ENCODE measurements at regions of chr7 and their contacts with region 1.

Region 1: DNA sequence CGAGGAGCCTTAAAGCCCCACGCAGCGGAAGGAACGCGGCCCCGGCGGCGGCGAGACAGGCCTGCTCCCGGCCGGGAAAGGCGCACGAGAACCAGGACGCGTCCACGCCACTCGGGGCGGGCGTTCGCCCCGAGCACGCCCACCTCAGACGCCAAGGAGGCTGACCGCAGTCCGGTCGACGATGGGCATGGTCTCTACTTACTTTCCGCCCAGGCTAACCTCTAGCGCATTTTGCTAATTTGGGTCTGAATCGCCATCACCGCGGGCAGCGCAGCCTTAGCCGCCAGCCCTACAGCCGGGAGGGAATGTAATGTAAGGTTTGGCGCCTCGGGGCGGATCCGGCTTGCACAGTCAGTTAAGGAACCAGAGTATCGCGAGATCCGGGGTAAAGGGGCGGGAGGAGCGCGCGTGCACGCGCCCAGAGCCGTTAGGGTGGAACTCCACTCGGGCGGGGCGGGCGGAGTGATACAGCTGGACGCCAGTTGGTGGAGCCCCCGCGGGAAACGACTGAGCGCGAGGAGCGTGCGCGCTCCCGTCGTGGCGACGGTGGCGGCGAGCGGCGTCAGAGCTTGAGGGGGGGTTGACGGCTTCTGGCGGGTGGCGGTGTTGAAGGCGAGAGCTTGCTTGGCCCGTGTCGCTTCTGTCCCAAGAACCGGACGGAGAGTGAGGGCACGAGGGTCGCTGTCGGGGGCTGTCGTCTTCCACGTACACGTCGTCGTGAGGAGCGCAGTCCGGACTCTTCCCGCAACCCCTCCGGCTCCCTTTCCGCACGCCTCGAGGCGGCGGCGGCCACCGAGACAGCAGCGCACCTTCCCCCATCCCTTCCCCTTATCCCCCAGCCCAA is at the start of gene LUC7L2:
- DNase-seq: peak; percentile 100
- H3K4me3 ChIP-seq: peak within 1 kb of the TSS; percentile 76 to 98 (median 94)
- H3K27ac ChIP-seq: peak within 1 kb of the TSS; percentile 98 to 100 (median 100)
- H3K4me1 ChIP-seq: peaks cover 0 to 41% (median 32%) of the 10 kb centered on the region in 4 donors
- H3K27me3 ChIP-seq: no peaks in the 10 kb centered on the region
- CTCF ChIP-seq: no peak
- EP300 ChIP-seq: peak in 2 of 4 donors; percentile 20 to 59
- POLR2A ChIP-seq: peak; percentile 82 to 93
- total RNA-seq, gene LUC7L2: 67.1 to 79.1 (median 74.5) TPM

Region 2: GRCh38 chr7:139340037-139340807 is 19.4 kb before region 1 on chr7:
- intact Hi-C with region 1: loop called (anchors 1 kb)
- DNase-seq: peak; percentile 100
- H3K4me3 ChIP-seq: peak overlapping the region; percentile 63 to 93 (median 88)
- H3K27ac ChIP-seq: peak overlapping the region; percentile 97 to 100 (median 99)
- H3K4me1 ChIP-seq: peaks cover 0 to 17% (median 10%) of the 10 kb centered on the region in 4 donors
- H3K27me3 ChIP-seq: no peaks in the 10 kb centered on the region
- CTCF ChIP-seq: peak; percentile 39 to 72 (median 64)
- EP300 ChIP-seq: peak in 2 of 4 donors; percentile 16 to 76
- POLR2A ChIP-seq: peak in 1 of 2 donors; percentile 41

Region 3: GRCh38 chr7:139422126-139422525 is 62.5 kb after region 1 on chr7:
- intact Hi-C with region 1: loop called (anchors 2 kb)
- DNase-seq: peak; percentile 74
- H3K4me3 ChIP-seq: no peak overlapping the region
- H3K27ac ChIP-seq: peak overlapping the region; percentile 36 to 82 (median 75)
- H3K4me1 ChIP-seq: peaks cover 0 to 34% (median 33%) of the 10 kb centered on the region in 4 donors
- H3K27me3 ChIP-seq: no peaks in the 10 kb centered on the region
- CTCF ChIP-seq: peak in 1 of 4 experiments; percentile 18
- EP300 ChIP-seq: peak in 1 of 4 donors; percentile 65
- POLR2A ChIP-seq: no peak

Measured in sigmoid colon (tissue), 7 donors.